CD8-positive, alpha-beta T cell (primary cell): ENCODE measurements at regions of chr9 and their contacts with region 1.

Region 1: DNA sequence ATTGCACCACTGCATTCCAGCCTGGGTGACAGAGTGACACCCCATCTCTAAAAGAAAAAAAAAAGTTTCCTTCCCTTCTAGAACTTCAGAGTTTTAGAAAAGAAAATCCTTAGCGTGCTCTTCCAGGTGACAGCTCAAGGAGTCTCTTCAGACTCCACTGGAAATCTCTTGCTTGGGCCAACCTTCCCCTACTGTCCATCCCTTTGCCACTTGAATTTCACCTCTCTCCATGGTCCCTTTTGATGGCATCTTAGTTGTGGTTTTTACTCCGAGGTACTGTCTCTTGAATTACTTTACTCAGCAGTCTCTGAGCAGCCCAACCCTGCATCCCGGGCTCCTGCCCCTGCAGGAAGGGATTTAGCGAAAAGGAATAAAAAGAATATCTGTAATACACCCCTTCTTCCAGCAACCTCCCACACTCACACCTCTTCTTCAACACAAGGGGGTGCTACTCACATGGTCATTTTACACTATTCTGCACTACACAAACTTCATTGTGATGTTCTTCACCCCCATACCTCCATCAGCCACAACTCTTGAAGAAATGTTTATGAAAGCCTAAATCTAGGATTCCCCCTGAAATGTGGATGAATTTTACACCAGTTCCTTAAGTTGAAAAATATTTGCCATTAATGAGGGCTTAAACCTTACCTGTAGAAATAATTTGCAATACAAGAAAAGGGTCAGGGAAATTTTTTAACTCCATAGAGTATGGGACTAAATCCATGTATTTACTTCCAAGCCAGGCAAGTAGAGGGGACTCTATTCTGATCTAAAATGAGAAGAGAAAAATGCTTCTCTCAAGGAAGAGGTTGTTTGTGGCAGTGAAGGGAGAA is 25.9 kb downstream of the TPD52L3 start:
- DNase-seq: peak in 7 of 9 experiments; percentile 6 to 75 (median 28)
- ATAC-seq: peak; percentile 86
- H3K4me3 ChIP-seq: no peak overlapping the region
- H3K4me3 Mint-ChIP-seq: no peak overlapping the region
- H3K27ac ChIP-seq: no peak overlapping the region
- H3K27ac Mint-ChIP-seq: no peak overlapping the region
- H3K4me1 ChIP-seq: no peaks in the 10 kb centered on the region
- H3K4me1 Mint-ChIP-seq: no peaks in the 10 kb centered on the region
- H3K27me3 ChIP-seq: peaks cover 0 to 3% of the 10 kb centered on the region in 2 experiments
- H3K27me3 Mint-ChIP-seq: peaks cover 8% of the 10 kb centered on the region
- CTCF ChIP-seq: peak; percentile 91

Region 2: DNA sequence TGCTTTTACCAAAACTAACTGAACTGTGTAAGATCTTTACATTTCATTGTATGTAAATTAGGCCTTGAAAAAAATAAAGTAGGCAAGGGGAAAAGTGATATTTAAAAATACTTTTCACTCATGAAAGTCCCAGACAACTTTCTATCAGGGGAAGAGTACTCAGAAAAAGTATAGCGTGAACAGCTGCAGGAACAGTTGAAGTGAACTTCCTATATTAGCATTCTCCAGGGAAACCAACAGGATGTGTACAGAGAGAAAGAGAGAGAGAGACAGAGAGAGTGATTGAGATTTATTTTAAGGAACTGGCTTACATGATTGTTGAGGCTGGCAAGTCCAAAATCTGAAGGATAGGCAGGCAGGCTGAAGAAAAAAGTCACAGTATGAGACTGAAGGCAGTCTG is 563.1 kb before region 1 on chr9:
- CTCF ChIA-PET with region 1: no interaction called
- POLR2A ChIA-PET with region 1: no interaction called
- intact Hi-C with region 1: no loop called
- DNase-seq: no peak
- ATAC-seq: no peak
- H3K4me3 ChIP-seq: no peak overlapping the region
- H3K4me3 Mint-ChIP-seq: no peak overlapping the region
- H3K27ac ChIP-seq: no peak overlapping the region
- H3K27ac Mint-ChIP-seq: peak overlapping the region; percentile 50
- H3K4me1 ChIP-seq: peaks cover 16% of the 10 kb centered on the region
- H3K4me1 Mint-ChIP-seq: peaks cover 54% of the 10 kb centered on the region
- H3K27me3 ChIP-seq: no peaks in the 10 kb centered on the region
- H3K27me3 Mint-ChIP-seq: no peaks in the 10 kb centered on the region
- CTCF ChIP-seq: no peak

Region 3: GRCh38 chr9:6055213-6055612 is 298.9 kb before region 1 on chr9:
- CTCF ChIA-PET with region 1: no interaction called
- POLR2A ChIA-PET with region 1: no interaction called
- intact Hi-C with region 1: loop called (anchors 5 kb)
- DNase-seq: peak in 4 of 9 experiments; percentile 32 to 80 (median 59)
- ATAC-seq: peak; percentile 69
- H3K4me3 ChIP-seq: no peak overlapping the region
- H3K4me3 Mint-ChIP-seq: no peak overlapping the region
- H3K27ac ChIP-seq: no peak overlapping the region
- H3K27ac Mint-ChIP-seq: no peak overlapping the region
- H3K4me1 ChIP-seq: no peaks in the 10 kb centered on the region
- H3K4me1 Mint-ChIP-seq: peaks cover 3% of the 10 kb centered on the region
- H3K27me3 ChIP-seq: no peaks in the 10 kb centered on the region
- H3K27me3 Mint-ChIP-seq: peaks cover 5% of the 10 kb centered on the region
- CTCF ChIP-seq: peak; percentile 40

Region 4: DNA sequence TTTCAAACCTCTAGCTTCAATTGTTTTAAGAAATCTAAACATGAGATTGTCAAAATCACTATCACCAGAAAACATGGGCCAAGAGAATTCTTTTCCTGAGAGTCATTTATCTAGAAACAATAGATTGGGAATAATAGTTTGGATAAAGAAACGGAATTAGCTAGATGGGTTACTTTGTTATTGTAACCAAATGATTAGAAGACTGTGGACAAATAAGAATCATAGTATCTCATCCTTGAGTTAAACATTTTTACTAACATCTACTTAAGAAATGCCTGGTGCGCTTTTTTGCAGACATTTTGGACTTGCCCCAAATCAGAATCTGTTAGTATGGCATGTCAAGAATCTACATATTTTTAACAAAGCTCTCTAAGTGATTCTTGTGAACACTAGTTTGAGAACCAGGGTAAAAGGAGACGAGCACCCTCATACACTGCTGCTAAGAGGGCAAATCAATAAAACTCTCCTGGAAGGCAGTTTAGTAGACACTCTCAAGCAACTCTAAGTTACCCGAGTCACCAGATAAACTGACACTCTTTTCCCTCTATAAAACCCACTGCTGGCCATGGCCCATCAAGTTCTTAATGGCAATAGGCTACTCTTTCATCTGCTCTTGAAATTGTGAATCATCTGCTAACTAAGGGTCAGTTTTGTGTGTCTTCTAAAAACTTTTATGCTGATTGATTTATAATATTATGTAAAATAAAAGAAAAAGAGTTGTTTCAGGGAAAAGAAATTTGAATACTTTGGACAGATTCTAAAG is 13.2 kb after region 1 on chr9:
- CTCF ChIA-PET with region 1: interaction called, 11 read pairs
- POLR2A ChIA-PET with region 1: interaction called, 4 read pairs
- intact Hi-C with region 1: no loop called
- DNase-seq: no peak
- ATAC-seq: no peak
- H3K4me3 ChIP-seq: no peak overlapping the region
- H3K4me3 Mint-ChIP-seq: no peak overlapping the region
- H3K27ac ChIP-seq: no peak overlapping the region
- H3K27ac Mint-ChIP-seq: no peak overlapping the region
- H3K4me1 ChIP-seq: no peaks in the 10 kb centered on the region
- H3K4me1 Mint-ChIP-seq: no peaks in the 10 kb centered on the region
- H3K27me3 ChIP-seq: no peaks in the 10 kb centered on the region
- H3K27me3 Mint-ChIP-seq: no peaks in the 10 kb centered on the region
- CTCF ChIP-seq: no peak

Region 5: GRCh38 chr9:6488395-6488794 is 134.3 kb after region 1 on chr9:
- CTCF ChIA-PET with region 1: interaction called, 3 read pairs
- POLR2A ChIA-PET with region 1: no interaction called
- intact Hi-C with region 1: loop called (anchors 5 kb)
- DNase-seq: peak in 2 of 9 experiments; percentile 11 to 18
- ATAC-seq: no peak
- H3K4me3 ChIP-seq: no peak overlapping the region
- H3K4me3 Mint-ChIP-seq: no peak overlapping the region
- H3K27ac ChIP-seq: no peak overlapping the region
- H3K27ac Mint-ChIP-seq: no peak overlapping the region
- H3K4me1 ChIP-seq: no peaks in the 10 kb centered on the region
- H3K4me1 Mint-ChIP-seq: peaks cover 7% of the 10 kb centered on the region
- H3K27me3 ChIP-seq: no peaks in the 10 kb centered on the region
- H3K27me3 Mint-ChIP-seq: no peaks in the 10 kb centered on the region
- CTCF ChIP-seq: no peak

Region 6: GRCh38 chr9:6566409-6567139 is 212.5 kb after region 1 on chr9:
- CTCF ChIA-PET with region 1: interaction called, 174 read pairs
- POLR2A ChIA-PET with region 1: no interaction called
- intact Hi-C with region 1: loop called in 1 of 2 experiments (anchors 1 kb)
- DNase-seq: peak in 1 of 9 experiments; percentile 12
- ATAC-seq: no peak
- H3K4me3 ChIP-seq: no peak overlapping the region
- H3K4me3 Mint-ChIP-seq: no peak overlapping the region
- H3K27ac ChIP-seq: no peak overlapping the region
- H3K27ac Mint-ChIP-seq: no peak overlapping the region
- H3K4me1 ChIP-seq: no peaks in the 10 kb centered on the region
- H3K4me1 Mint-ChIP-seq: no peaks in the 10 kb centered on the region
- H3K27me3 ChIP-seq: peaks cover 0 to 2% of the 10 kb centered on the region in 2 experiments
- H3K27me3 Mint-ChIP-seq: no peaks in the 10 kb centered on the region
- CTCF ChIP-seq: no peak

Region 7: GRCh38 chr9:6667633-6668280 is 313.7 kb after region 1 on chr9:
- CTCF ChIA-PET with region 1: interaction called, 4 read pairs
- POLR2A ChIA-PET with region 1: no interaction called
- intact Hi-C with region 1: loop called (anchors 1 to 5 kb)
- DNase-seq: peak in 2 of 9 experiments; percentile 40 to 55
- ATAC-seq: no peak
- H3K4me3 ChIP-seq: no peak overlapping the region
- H3K4me3 Mint-ChIP-seq: no peak overlapping the region
- H3K27ac ChIP-seq: no peak overlapping the region
- H3K27ac Mint-ChIP-seq: no peak overlapping the region
- H3K4me1 ChIP-seq: no peaks in the 10 kb centered on the region
- H3K4me1 Mint-ChIP-seq: no peaks in the 10 kb centered on the region
- H3K27me3 ChIP-seq: no peaks in the 10 kb centered on the region
- H3K27me3 Mint-ChIP-seq: no peaks in the 10 kb centered on the region
- CTCF ChIP-seq: peak; percentile 53